ENCODE measurements at regions of chr3 and their contacts with region 1.

Region 1: GRCh38 chr3:137946345-137946973 is 63.5 kb upstream of the CLDN18 start:
- DNase-seq: no peak
- ATAC-seq: peak; percentile 93
- H3K4me3 ChIP-seq: no peak overlapping the region
- H3K27ac ChIP-seq: no peak overlapping the region
- H3K4me1 ChIP-seq: no peaks in the 10 kb centered on the region
- H3K27me3 ChIP-seq: no peaks in the 10 kb centered on the region
- CTCF ChIP-seq: peak; percentile 65 to 69 (median 68); a peak in 5 of 6 replicates
- EP300 ChIP-seq: no peak
- POLR2A ChIP-seq: no peak
- RAD21 ChIP-seq: peak; percentile 91

Region 2: GRCh38 chr3:137032465-137033120 is 913.9 kb before region 1 on chr3:
- CTCF ChIA-PET with region 1: no interaction called
- POLR2A ChIA-PET with region 1: no interaction called
- RAD21 ChIA-PET with region 1: interaction called, 3 read pairs
- SMC1A ChIA-PET with region 1: no interaction called
- in situ Hi-C with region 1: no loop called
- intact Hi-C with region 1: loop called (anchors 2 kb)
- DNase-seq: peak; percentile 13
- ATAC-seq: peak; percentile 97
- H3K4me3 ChIP-seq: peak overlapping the region; percentile 22; the same call in 1 of the 2 replicates
- H3K27ac ChIP-seq: no peak overlapping the region
- H3K4me1 ChIP-seq: no peaks in the 10 kb centered on the region
- H3K27me3 ChIP-seq: no peaks in the 10 kb centered on the region
- CTCF ChIP-seq: peak; percentile 96 to 100 (median 99)
- EP300 ChIP-seq: no peak
- POLR2A ChIP-seq: no peak
- RAD21 ChIP-seq: peak; percentile 95

Region 3: GRCh38 chr3:137121704-137122314 is 824.6 kb before region 1 on chr3:
- CTCF ChIA-PET with region 1: interaction called, 6 read pairs
- POLR2A ChIA-PET with region 1: no interaction called
- RAD21 ChIA-PET with region 1: interaction called, 3 read pairs
- SMC1A ChIA-PET with region 1: interaction called, 3 read pairs
- in situ Hi-C with region 1: loop called (anchors 10 kb)
- intact Hi-C with region 1: no loop called
- DNase-seq: peak; percentile 8
- ATAC-seq: peak; percentile 92
- H3K4me3 ChIP-seq: no peak overlapping the region
- H3K27ac ChIP-seq: no peak overlapping the region
- H3K4me1 ChIP-seq: no peaks in the 10 kb centered on the region
- H3K27me3 ChIP-seq: no peaks in the 10 kb centered on the region
- CTCF ChIP-seq: peak; percentile 75 to 81 (median 80)
- EP300 ChIP-seq: no peak
- POLR2A ChIP-seq: no peak
- RAD21 ChIP-seq: peak; percentile 91

Region 4: GRCh38 chr3:137519602-137520001 is 426.9 kb before region 1 on chr3:
- CTCF ChIA-PET with region 1: no interaction called
- POLR2A ChIA-PET with region 1: no interaction called
- RAD21 ChIA-PET with region 1: no interaction called
- SMC1A ChIA-PET with region 1: no interaction called
- in situ Hi-C with region 1: no loop called
- intact Hi-C with region 1: no loop called
- DNase-seq: no peak
- ATAC-seq: no peak
- H3K4me3 ChIP-seq: no peak overlapping the region
- H3K27ac ChIP-seq: no peak overlapping the region
- H3K4me1 ChIP-seq: no peaks in the 10 kb centered on the region
- H3K27me3 ChIP-seq: no peaks in the 10 kb centered on the region
- CTCF ChIP-seq: no peak
- EP300 ChIP-seq: no peak
- POLR2A ChIP-seq: no peak
- RAD21 ChIP-seq: no peak

Region 5: DNA sequence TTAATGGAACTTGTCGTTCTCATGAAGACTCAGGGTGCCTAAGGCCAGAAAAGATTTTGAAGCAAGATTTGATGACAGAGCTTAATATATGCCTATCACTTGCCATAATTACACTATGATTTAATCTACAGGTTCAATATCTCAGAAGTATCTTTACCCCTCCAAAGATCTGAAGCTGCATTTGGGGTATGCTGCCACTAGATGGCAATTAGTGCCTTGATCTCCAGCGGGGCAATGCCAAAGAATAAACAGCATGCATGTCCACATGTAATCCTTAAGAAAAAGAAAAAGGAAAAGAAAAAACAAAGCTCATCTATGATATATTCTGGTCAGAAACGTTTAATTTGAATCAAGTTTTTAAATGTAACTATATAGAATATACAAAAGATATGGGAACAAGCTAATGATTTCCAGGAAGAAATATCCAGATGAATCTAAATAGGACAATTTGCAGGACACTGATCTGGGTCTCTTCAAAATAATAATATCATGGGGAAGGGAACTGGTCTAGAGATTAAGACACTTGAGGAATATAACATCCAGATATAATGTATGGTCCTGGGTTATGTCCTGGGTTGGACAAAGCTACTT is 237.4 kb before region 1 on chr3:
- CTCF ChIA-PET with region 1: interaction called, 16 read pairs
- POLR2A ChIA-PET with region 1: no interaction called
- RAD21 ChIA-PET with region 1: interaction called, 6 read pairs
- SMC1A ChIA-PET with region 1: interaction called, 6 read pairs
- in situ Hi-C with region 1: no loop called
- intact Hi-C with region 1: loop called (anchors 1 kb)
- DNase-seq: no peak
- ATAC-seq: peak; percentile 50; the same call in 1 of the 3 replicates
- H3K4me3 ChIP-seq: no peak overlapping the region
- H3K27ac ChIP-seq: no peak overlapping the region
- H3K4me1 ChIP-seq: no peaks in the 10 kb centered on the region
- H3K27me3 ChIP-seq: no peaks in the 10 kb centered on the region; a peak in 1 of 4 replicates
- CTCF ChIP-seq: peak; percentile 46 to 64 (median 51)
- EP300 ChIP-seq: no peak
- POLR2A ChIP-seq: no peak
- RAD21 ChIP-seq: peak; percentile 65

Region 6: DNA sequence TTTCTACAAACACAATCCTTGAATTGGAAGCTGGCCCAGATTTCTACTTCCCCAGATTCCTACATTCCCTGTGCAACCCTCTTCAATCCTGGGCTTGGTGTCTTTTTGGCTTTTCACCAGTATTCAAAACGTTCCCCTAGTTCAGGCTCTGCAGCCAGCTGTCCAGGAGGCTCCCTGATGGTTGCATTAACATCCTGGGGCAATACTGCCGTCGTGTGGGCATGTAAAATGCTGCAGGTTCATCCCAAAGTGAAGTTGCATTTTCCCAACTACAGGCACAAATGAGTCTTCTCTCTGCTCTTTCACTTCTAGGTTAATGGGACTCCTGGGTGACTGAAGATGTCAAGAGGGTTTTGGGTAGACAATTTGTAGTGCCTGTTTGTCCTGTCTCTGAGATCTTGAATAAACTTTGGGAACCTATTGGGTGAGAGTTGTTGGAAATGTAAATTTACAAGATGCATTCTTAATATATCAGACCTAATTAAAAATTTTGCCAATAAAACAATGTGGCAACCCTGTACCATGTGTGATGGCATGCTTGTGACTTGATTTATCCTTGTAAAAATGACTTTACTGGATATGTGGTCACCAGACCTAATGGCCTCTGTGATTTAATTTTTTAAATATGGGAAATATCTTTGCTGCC is 153.7 kb before region 1 on chr3:
- CTCF ChIA-PET with region 1: no interaction called
- POLR2A ChIA-PET with region 1: no interaction called
- RAD21 ChIA-PET with region 1: no interaction called
- SMC1A ChIA-PET with region 1: no interaction called
- in situ Hi-C with region 1: no loop called
- intact Hi-C with region 1: loop called (anchors 10 kb)
- DNase-seq: no peak
- ATAC-seq: 0 out of 3 replicates have a peak, but pooled peaks have one; percentile 27
- H3K4me3 ChIP-seq: no peak overlapping the region
- H3K27ac ChIP-seq: no peak overlapping the region
- H3K4me1 ChIP-seq: no peaks in the 10 kb centered on the region
- H3K27me3 ChIP-seq: no peaks in the 10 kb centered on the region; a peak in 1 of 4 replicates
- CTCF ChIP-seq: peak; percentile 42 to 74 (median 71)
- EP300 ChIP-seq: no peak
- POLR2A ChIP-seq: no peak
- RAD21 ChIP-seq: peak; percentile 84

Region 7: GRCh38 chr3:137845194-137845593 is 101.3 kb before region 1 on chr3:
- CTCF ChIA-PET with region 1: no interaction called
- POLR2A ChIA-PET with region 1: no interaction called
- RAD21 ChIA-PET with region 1: no interaction called
- SMC1A ChIA-PET with region 1: no interaction called
- in situ Hi-C with region 1: no loop called
- intact Hi-C with region 1: no loop called
- DNase-seq: no peak
- ATAC-seq: no peak
- H3K4me3 ChIP-seq: no peak overlapping the region
- H3K27ac ChIP-seq: no peak overlapping the region
- H3K4me1 ChIP-seq: no peaks in the 10 kb centered on the region
- H3K27me3 ChIP-seq: no peaks in the 10 kb centered on the region; a peak in 1 of 4 replicates
- CTCF ChIP-seq: no peak
- EP300 ChIP-seq: no peak
- POLR2A ChIP-seq: no peak
- RAD21 ChIP-seq: no peak

Region 8: GRCh38 chr3:137906985-137907640 is 39.3 kb before region 1 on chr3:
- CTCF ChIA-PET with region 1: no interaction called
- POLR2A ChIA-PET with region 1: no interaction called
- RAD21 ChIA-PET with region 1: no interaction called
- SMC1A ChIA-PET with region 1: no interaction called
- in situ Hi-C with region 1: no loop called
- intact Hi-C with region 1: no loop called
- DNase-seq: no peak
- ATAC-seq: no peak
- H3K4me3 ChIP-seq: no peak overlapping the region
- H3K27ac ChIP-seq: no peak overlapping the region
- H3K4me1 ChIP-seq: no peaks in the 10 kb centered on the region
- H3K27me3 ChIP-seq: no peaks in the 10 kb centered on the region
- CTCF ChIP-seq: no peak
- EP300 ChIP-seq: no peak
- POLR2A ChIP-seq: no peak
- RAD21 ChIP-seq: no peak

Region 9: GRCh38 chr3:137962251-137962650 is 15.8 kb after region 1 on chr3:
- CTCF ChIA-PET with region 1: interaction called, 12 read pairs
- POLR2A ChIA-PET with region 1: no interaction called
- RAD21 ChIA-PET with region 1: interaction called, 3 read pairs
- SMC1A ChIA-PET with region 1: interaction called, 4 read pairs
- in situ Hi-C with region 1: no loop called
- intact Hi-C with region 1: no loop called
- DNase-seq: no peak
- ATAC-seq: no peak
- H3K4me3 ChIP-seq: no peak overlapping the region
- H3K27ac ChIP-seq: no peak overlapping the region
- H3K4me1 ChIP-seq: no peaks in the 10 kb centered on the region
- H3K27me3 ChIP-seq: no peaks in the 10 kb centered on the region
- CTCF ChIP-seq: no peak
- EP300 ChIP-seq: no peak
- POLR2A ChIP-seq: no peak
- RAD21 ChIP-seq: no peak

Region 10: GRCh38 chr3:137970914-137971831 is 24.7 kb after region 1 on chr3:
- CTCF ChIA-PET with region 1: interaction called, 18 read pairs
- POLR2A ChIA-PET with region 1: no interaction called
- RAD21 ChIA-PET with region 1: interaction called, 4 read pairs
- SMC1A ChIA-PET with region 1: interaction called, 5 read pairs
- in situ Hi-C with region 1: no loop called
- intact Hi-C with region 1: no loop called
- DNase-seq: no peak
- ATAC-seq: peak; percentile 99
- H3K4me3 ChIP-seq: no peak overlapping the region
- H3K27ac ChIP-seq: no peak overlapping the region
- H3K4me1 ChIP-seq: no peaks in the 10 kb centered on the region
- H3K27me3 ChIP-seq: no peaks in the 10 kb centered on the region
- CTCF ChIP-seq: peak; percentile 80 to 87 (median 86)
- EP300 ChIP-seq: no peak
- POLR2A ChIP-seq: no peak
- RAD21 ChIP-seq: peak; percentile 72

Region 11: GRCh38 chr3:138027821-138028220 is 81.4 kb after region 1 on chr3:
- CTCF ChIA-PET with region 1: no interaction called
- POLR2A ChIA-PET with region 1: no interaction called
- RAD21 ChIA-PET with region 1: no interaction called
- SMC1A ChIA-PET with region 1: no interaction called
- in situ Hi-C with region 1: no loop called
- intact Hi-C with region 1: no loop called
- DNase-seq: no peak
- ATAC-seq: no peak
- H3K4me3 ChIP-seq: no peak overlapping the region
- H3K27ac ChIP-seq: no peak overlapping the region
- H3K4me1 ChIP-seq: peaks cover 35% of the 10 kb centered on the region
- H3K27me3 ChIP-seq: no peaks in the 10 kb centered on the region
- CTCF ChIP-seq: no peak
- EP300 ChIP-seq: no peak
- POLR2A ChIP-seq: no peak
- RAD21 ChIP-seq: no peak